AG04449 (cell line): ENCODE measurements at regions of chr19 and their contacts with region 1.

Region 1: GRCh38 chr19:4400135-4400936 is at the start of gene SH3GL1:
- DNase-seq: no peak
- H3K4me3 ChIP-seq: peak within 1 kb of the TSS; percentile 86
- CTCF ChIP-seq: peak; percentile 98

Region 2: GRCh38 chr19:4342615-4343369 is 57.5 kb before region 1 on chr19:
- CTCF ChIA-PET with region 1: interaction called, 21 read pairs
- POLR2A ChIA-PET with region 1: no interaction called
- DNase-seq: peak; percentile 100
- H3K4me3 ChIP-seq: peak overlapping the region; percentile 89
- CTCF ChIP-seq: peak; percentile 38

Region 3: GRCh38 chr19:4375164-4376027 is 24.9 kb before region 1 on chr19:
- CTCF ChIA-PET with region 1: interaction called, 78 read pairs
- POLR2A ChIA-PET with region 1: interaction called, 4 read pairs
- DNase-seq: no peak
- H3K4me3 ChIP-seq: no peak overlapping the region
- CTCF ChIP-seq: peak; percentile 73

Region 4: DNA sequence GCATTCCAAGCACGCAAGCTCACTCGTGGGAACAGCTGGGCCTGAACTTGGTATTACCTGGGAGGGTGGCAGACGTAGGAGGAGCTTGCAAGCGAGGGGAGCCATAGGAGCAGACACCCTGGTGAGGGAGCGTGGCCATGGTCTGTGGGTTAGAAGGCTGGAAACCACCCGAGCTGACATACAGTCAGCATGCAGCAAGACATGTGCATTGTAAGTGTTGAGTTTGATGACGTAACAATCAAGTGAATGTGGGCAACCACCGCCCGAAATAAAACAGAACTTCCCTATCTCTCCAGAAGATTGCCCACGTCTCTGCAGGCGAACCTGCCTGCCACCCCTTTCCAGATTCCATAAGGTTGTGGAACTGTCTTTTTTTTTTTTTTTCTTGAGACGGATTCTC is 30.4 kb after region 1 on chr19:
- CTCF ChIA-PET with region 1: interaction called, 10 read pairs
- POLR2A ChIA-PET with region 1: no interaction called
- DNase-seq: no peak
- H3K4me3 ChIP-seq: no peak overlapping the region
- CTCF ChIP-seq: no peak